ENCODE measurements at regions of chr15 and their contacts with region 1.

Region 1: GRCh38 chr15:80070840-80071239 is 11.4 kb downstream of the ZFAND6 start:
- DNase-seq: no peak
- H3K4me3 ChIP-seq: no peak overlapping the region
- H3K27ac ChIP-seq: no peak overlapping the region
- H3K4me1 ChIP-seq: peaks cover 0 to 13% (median 5%) of the 10 kb centered on the region in 4 experiments; a peak in 6 of 7 replicates
- H3K27me3 ChIP-seq: no peaks in the 10 kb centered on the region
- CTCF ChIP-seq: no peak
- EP300 ChIP-seq: no peak
- POLR2A ChIP-seq: no peak
- RAD21 ChIP-seq: no peak

Region 2: GRCh38 chr15:80058851-80059785 is 11.7 kb before region 1 on chr15 and contains the start of gene ZFAND6:
- CTCF ChIA-PET with region 1: interaction called, 4 read pairs
- POLR2A ChIA-PET with region 1: interaction called, 11 read pairs
- DNase-seq: peak; percentile 88 to 98
- H3K4me3 ChIP-seq: peak within 1 kb of the TSS; percentile 60 to 92 (median 82)
- H3K27ac ChIP-seq: peak within 1 kb of the TSS; percentile 86
- H3K4me1 ChIP-seq: peaks cover 0 to 20% (median 10%) of the 10 kb centered on the region in 4 experiments
- H3K27me3 ChIP-seq: no peaks in the 10 kb centered on the region
- CTCF ChIP-seq: peak in 2 of 3 experiments; percentile 10 to 17; a peak in 3 of 4 replicates
- EP300 ChIP-seq: no peak; a peak in 1 of 3 replicates
- POLR2A ChIP-seq: peak; percentile 91
- RAD21 ChIP-seq: peak; percentile 21; a peak in 3 of 4 replicates
- total RNA-seq, gene ZFAND6: 122 and 136 TPM in 2 replicates

Region 3: DNA sequence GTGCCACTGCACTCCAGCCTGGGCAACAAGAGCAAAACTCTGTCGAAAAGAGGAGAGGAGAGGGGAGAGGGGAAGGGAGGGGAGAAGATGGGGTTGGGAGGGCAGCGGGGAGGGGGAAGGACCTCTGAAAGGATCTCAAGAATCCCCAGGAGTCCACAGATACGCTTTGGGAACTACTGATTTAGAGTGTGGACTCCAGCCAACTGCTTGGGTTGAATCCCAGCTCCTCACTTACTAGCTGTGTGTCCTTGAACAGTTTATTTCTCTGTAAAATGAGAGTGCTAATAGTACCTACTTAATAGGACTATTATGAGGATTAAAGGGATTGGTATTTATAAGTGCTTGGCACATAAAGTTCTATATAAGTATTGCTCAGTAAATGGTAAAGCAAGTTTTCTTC is 36.9 kb after region 1 on chr15:
- CTCF ChIA-PET with region 1: no interaction called
- POLR2A ChIA-PET with region 1: no interaction called
- DNase-seq: no peak
- H3K4me3 ChIP-seq: no peak overlapping the region
- H3K27ac ChIP-seq: no peak overlapping the region
- H3K4me1 ChIP-seq: peaks cover 0 to 6% (median 0%) of the 10 kb centered on the region in 4 experiments; a peak in 2 of 7 replicates
- H3K27me3 ChIP-seq: no peaks in the 10 kb centered on the region
- CTCF ChIP-seq: no peak
- EP300 ChIP-seq: no peak
- POLR2A ChIP-seq: no peak
- RAD21 ChIP-seq: no peak

Measured in H1 (cell line).